Activated CD8-positive, alpha-beta T cell treated with anti-CD3 and anti-CD28 coated beads, Interleukin-2, amount 10 ng/mL, durations not matched to agents 7 days and 5 days (primary cell): ENCODE measurements at regions of chr11 and their contacts with region 1.

Region 1: DNA sequence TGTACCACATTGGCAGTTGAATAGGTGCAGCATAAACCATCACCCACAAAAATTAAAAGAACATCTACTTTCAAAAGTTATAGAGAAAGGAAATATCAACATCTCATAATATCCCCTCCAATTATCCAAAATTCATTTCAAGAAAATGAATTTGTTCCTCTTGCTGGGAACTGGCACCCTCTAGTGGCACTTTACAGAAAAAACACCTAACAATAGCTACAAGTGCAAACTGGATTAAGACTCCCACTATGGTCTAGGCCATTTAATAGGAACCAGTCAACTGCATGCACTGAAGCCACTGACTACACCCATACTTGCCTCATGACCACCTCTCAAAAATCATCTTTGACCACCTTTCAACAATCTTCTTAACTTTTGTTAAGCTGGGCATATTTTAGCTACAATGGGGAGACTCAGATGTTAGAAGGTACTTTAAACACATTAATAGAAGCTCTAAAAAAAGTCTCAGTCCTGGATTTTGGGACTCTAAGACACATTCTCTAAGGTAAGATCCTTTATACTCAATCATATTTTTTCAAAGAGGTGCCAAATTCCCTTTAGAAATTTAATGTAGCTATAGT is 17.3 kb downstream of the TRAF6 start:
- DNase-seq: peak; percentile 57
- ATAC-seq: peak; percentile 47
- H3K4me3 Mint-ChIP-seq: no peak overlapping the region
- H3K27ac Mint-ChIP-seq: no peak overlapping the region
- H3K4me1 Mint-ChIP-seq: peaks cover 19% of the 10 kb centered on the region
- H3K27me3 Mint-ChIP-seq: no peaks in the 10 kb centered on the region

Region 2: GRCh38 chr11:36289226-36289852 is 203.5 kb before region 1 on chr11 and contains the start of gene COMMD9:
- CTCF ChIA-PET with region 1: interaction called, 178 read pairs
- POLR2A ChIA-PET with region 1: interaction called, 7 read pairs
- DNase-seq: peak; percentile 97
- ATAC-seq: peak; percentile 99
- H3K4me3 Mint-ChIP-seq: peak within 1 kb of the TSS; percentile 92
- H3K27ac Mint-ChIP-seq: peak within 1 kb of the TSS; percentile 89
- H3K4me1 Mint-ChIP-seq: peaks cover 28% of the 10 kb centered on the region
- H3K27me3 Mint-ChIP-seq: peaks cover 3% of the 10 kb centered on the region
- total RNA-seq, gene COMMD9: 44.6 to 47.5 TPM

Region 3: GRCh38 chr11:36306888-36307287 is 185.9 kb before region 1 on chr11:
- CTCF ChIA-PET with region 1: interaction called, 10 read pairs
- POLR2A ChIA-PET with region 1: no interaction called
- DNase-seq: peak; percentile 35
- ATAC-seq: no peak
- H3K4me3 Mint-ChIP-seq: no peak overlapping the region
- H3K27ac Mint-ChIP-seq: no peak overlapping the region
- H3K4me1 Mint-ChIP-seq: peaks cover 5% of the 10 kb centered on the region
- H3K27me3 Mint-ChIP-seq: peaks cover 22% of the 10 kb centered on the region

Region 4: DNA sequence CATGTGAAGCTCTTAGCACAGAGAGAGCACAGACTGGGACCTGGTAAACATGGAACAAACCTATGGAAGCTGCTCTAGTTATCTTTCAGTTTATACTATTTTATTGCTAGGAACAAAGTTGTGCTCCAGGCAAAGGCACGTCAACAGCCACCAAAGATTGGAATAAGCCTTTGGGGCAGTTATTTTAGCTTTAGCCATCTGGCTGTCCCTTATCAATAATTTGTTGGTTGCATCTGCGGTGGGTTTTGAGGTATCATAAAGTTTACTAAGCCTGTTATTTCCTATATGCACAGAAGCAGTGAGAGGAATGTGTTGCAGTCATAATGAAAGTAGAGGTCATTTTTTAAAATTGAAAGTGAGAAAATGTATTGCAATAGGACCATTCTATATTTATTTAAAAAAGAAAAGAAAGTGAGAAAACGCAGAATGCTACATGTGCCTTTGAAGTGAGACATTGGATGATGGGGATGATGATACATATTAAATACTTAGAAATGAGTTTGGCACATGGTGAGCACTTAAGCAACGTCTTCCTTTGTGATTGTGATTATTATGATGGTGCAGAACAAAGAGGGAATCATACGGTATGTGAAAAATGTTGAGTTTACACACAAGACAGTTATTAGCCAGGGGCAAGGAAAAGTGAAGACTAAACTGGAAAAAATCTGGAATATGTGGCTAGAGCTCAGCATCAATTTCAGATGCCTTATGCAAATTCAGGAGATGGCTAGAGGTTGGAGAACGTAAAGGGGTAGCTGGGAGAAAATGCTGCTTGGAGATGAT is 138.4 kb before region 1 on chr11:
- CTCF ChIA-PET with region 1: interaction called, 50 read pairs
- POLR2A ChIA-PET with region 1: no interaction called
- DNase-seq: no peak
- ATAC-seq: peak; percentile 29
- H3K4me3 Mint-ChIP-seq: no peak overlapping the region
- H3K27ac Mint-ChIP-seq: no peak overlapping the region
- H3K4me1 Mint-ChIP-seq: peaks cover 43% of the 10 kb centered on the region
- H3K27me3 Mint-ChIP-seq: peaks cover 24% of the 10 kb centered on the region

Region 5: DNA sequence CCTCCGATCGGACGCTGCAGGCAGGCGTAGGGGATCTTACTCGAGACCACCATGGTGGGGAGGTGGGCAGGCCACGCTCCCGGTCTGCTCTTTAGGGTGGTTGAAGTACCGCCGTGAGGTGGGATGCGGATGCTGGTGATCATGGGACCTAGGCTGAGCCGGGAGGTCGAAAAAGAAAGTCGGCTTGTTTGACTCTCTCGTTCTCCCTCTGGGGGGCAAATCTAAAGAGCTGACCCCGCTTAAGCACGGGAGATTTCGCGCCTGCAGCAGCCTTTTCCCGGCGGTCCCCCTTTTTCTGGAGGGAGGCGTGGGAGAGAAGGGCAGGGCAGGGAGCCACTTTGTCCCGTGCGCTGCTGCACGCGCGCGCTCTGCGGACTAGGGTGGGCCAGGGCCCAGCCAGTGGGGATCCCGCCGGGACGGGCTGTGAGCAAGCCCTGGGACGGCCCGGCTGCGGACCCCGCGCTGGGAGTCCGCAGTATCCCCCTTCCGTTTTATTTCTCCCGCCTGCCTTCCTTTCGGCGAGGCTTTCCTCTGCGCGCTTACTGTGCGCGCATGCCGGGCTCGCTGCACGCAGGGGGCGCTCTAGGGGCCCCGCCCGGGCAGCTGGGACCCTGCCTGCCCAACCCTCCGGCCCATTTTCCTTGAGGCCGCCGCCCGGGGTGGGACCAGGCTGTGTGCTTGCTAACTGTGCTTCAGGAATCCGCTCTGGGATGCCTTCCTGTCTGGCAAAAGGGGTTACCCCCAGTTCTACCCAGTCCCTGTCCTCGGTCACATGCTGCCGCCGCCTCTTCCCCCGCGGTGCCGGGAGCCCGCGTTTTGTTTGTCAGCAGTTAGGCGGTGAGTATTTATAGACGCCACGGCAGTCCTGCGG is 115.7 kb before region 1 on chr11:
- CTCF ChIA-PET with region 1: interaction called, 12 read pairs
- POLR2A ChIA-PET with region 1: interaction called, 3 read pairs
- DNase-seq: peak; percentile 61
- ATAC-seq: peak; percentile 72
- H3K4me3 Mint-ChIP-seq: peak overlapping the region; percentile 85
- H3K27ac Mint-ChIP-seq: peak overlapping the region; percentile 55
- H3K4me1 Mint-ChIP-seq: peaks cover 29% of the 10 kb centered on the region
- H3K27me3 Mint-ChIP-seq: peaks cover 66% of the 10 kb centered on the region

Region 6: DNA sequence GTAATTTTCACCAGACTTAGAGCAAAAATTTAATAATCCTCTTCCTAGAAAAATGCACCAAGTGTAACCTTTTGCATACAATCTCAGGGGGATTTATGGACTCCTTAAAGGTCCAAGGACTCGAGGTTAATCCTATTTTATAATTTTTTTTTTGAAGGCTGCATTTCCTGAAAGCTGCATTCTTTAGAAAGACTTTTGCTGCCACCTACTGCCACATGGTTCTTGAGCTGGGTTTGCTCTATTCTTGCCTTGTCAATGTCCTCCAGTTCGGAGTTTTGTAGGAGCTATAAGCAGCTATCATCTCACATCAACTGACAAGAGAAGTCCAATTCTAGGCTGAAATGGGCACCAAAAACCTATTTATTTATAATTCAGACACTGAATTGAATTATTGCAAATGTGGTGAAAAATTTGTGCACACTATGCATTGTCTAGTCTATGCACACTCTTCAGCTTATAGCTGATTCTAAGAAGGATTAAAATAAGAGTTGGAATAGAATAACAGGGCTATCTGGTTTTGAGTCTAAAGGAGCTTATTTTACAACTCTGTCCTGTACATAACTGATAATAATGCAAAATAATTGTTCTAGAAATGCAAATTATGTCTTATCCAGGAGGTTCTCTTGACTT is 14.0 kb before region 1 on chr11:
- CTCF ChIA-PET with region 1: interaction called, 64 read pairs
- POLR2A ChIA-PET with region 1: no interaction called
- DNase-seq: peak; percentile 51
- ATAC-seq: peak; percentile 47
- H3K4me3 Mint-ChIP-seq: no peak overlapping the region
- H3K27ac Mint-ChIP-seq: no peak overlapping the region
- H3K4me1 Mint-ChIP-seq: peaks cover 6% of the 10 kb centered on the region
- H3K27me3 Mint-ChIP-seq: peaks cover 7% of the 10 kb centered on the region